ENCODE measurements at regions of chr4 and their contacts with region 1.

Region 1: DNA sequence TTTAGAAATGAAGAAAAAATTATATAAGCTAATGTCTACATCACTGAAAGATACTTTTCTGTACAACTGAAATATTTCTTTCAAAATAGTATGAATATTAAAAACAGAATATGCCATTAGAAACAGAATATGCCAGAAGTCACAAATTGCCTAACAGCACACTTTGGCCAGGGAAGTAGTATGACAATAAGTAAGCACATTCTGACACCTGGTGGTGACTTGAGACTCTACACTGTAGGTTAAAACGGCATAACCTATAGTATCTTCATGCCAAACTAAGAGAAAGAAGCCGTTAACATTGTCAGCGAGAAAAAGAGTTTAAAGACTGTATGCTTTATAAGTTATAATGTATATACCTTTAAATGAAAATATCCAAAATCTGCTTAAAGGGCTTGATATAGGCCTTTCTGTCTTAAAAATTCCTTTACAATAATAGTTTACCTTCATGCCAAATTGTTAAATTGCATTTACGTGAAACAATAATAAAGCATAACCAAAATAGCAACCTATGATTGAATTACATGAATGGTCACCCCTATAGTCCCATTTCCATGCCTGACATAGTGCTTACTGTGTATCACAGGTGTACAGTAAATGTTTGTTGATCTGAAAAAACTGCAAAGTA is 32.8 kb downstream of the FAM13A start:
- DNase-seq: peak; percentile 61
- H3K4me3 Mint-ChIP-seq: no peak overlapping the region
- H3K27ac Mint-ChIP-seq: no peak overlapping the region
- H3K4me1 Mint-ChIP-seq: no peaks in the 10 kb centered on the region
- H3K27me3 Mint-ChIP-seq: no peaks in the 10 kb centered on the region
- CTCF ChIP-seq: peak; percentile 58

Region 2: GRCh38 chr4:88526221-88526815 is 497.8 kb before region 1 on chr4:
- CTCF ChIA-PET with region 1: no interaction called
- intact Hi-C with region 1: loop called (anchors 2 kb)
- DNase-seq: peak; percentile 2
- H3K4me3 Mint-ChIP-seq: no peak overlapping the region
- H3K27ac Mint-ChIP-seq: no peak overlapping the region
- H3K4me1 Mint-ChIP-seq: peaks cover 9% of the 10 kb centered on the region
- H3K27me3 Mint-ChIP-seq: no peaks in the 10 kb centered on the region
- CTCF ChIP-seq: no peak

Region 3: DNA sequence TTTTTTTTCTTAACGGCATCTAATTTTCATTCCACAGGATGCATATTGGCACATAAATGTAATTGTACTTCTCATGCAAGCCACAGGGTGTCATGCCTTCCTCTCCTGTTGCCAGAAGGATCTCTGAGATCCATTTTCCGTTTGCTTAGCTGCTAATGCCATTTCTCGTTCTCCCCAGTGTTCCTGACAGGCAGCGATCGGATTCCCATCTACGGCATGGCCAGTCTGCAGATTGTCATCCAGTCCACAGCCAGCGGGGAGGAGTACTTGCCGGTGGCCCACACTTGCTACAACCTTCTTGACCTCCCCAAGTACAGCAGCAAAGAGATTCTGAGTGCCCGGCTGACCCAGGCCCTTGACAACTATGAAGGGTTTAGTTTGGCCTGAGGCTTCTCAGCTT is 317.6 kb before region 1 on chr4:
- CTCF ChIA-PET with region 1: no interaction called
- intact Hi-C with region 1: loop called (anchors 5 kb)
- DNase-seq: no peak
- H3K4me3 Mint-ChIP-seq: no peak overlapping the region
- H3K27ac Mint-ChIP-seq: no peak overlapping the region
- H3K4me1 Mint-ChIP-seq: no peaks in the 10 kb centered on the region
- H3K27me3 Mint-ChIP-seq: no peaks in the 10 kb centered on the region
- CTCF ChIP-seq: no peak

Region 4: GRCh38 chr4:88823058-88823919 is 200.9 kb before region 1 on chr4:
- CTCF ChIA-PET with region 1: interaction called, 19 read pairs
- intact Hi-C with region 1: loop called (anchors 1 kb)
- DNase-seq: peak; percentile 67
- H3K4me3 Mint-ChIP-seq: peak overlapping the region; percentile 80
- H3K27ac Mint-ChIP-seq: peak overlapping the region; percentile 93
- H3K4me1 Mint-ChIP-seq: peaks cover 8% of the 10 kb centered on the region
- H3K27me3 Mint-ChIP-seq: no peaks in the 10 kb centered on the region
- CTCF ChIP-seq: no peak

Region 5: DNA sequence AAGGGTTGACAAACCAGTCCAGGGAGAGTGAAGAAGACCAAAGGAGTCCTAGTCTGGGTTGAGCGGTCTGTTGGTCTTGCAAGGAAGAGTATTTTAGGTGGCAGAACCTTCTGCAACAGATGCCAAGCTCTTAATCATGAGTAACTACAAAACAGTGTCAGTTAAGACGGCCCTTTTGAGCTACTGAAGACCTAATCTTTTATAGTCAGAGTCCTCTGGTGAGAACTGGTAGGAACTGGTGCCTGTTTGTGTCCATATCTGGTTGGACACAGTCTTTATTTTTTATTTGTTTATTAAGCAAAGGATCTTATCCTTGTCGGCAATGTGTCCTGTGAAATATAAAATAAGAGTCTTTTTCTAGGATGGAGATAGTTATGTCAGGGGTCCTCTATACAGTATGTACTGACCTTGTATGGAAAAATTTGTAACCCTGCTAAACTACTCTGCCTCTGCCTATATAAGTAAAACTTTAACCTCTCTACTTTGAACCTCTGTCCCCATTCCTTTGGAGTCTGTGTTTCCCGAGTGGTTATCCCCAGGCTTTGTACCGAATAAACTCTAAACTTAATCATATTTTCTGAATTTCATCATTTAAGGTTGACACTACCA is 14.3 kb before region 1 on chr4:
- CTCF ChIA-PET with region 1: no interaction called
- intact Hi-C with region 1: loop called (anchors 1 kb)
- DNase-seq: no peak
- H3K4me3 Mint-ChIP-seq: no peak overlapping the region
- H3K27ac Mint-ChIP-seq: no peak overlapping the region
- H3K4me1 Mint-ChIP-seq: no peaks in the 10 kb centered on the region
- H3K27me3 Mint-ChIP-seq: no peaks in the 10 kb centered on the region
- CTCF ChIP-seq: no peak

Region 6: DNA sequence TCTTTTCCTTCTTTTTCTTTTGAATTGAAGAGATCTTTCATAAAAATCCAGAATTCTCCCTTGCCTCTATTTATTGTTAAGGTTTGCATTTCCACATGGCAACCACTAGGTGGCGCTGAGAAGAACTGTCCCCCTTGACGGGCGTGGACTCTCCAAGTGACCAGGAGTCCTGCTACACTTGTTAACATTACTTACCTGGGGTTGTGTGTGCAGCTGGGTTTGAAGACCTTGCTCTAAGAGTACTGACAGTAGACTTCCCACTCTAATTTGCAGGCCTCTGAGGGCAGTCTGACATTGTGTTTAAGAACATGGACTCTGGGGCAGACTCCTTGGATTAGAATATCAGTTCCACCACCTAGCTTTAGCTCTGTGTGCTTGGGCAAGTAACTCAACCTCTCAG is 230.7 kb after region 1 on chr4:
- CTCF ChIA-PET with region 1: no interaction called
- intact Hi-C with region 1: no loop called
- DNase-seq: peak; percentile 41
- H3K4me3 Mint-ChIP-seq: no peak overlapping the region
- H3K27ac Mint-ChIP-seq: peak overlapping the region; percentile 8
- H3K4me1 Mint-ChIP-seq: no peaks in the 10 kb centered on the region
- H3K27me3 Mint-ChIP-seq: no peaks in the 10 kb centered on the region
- CTCF ChIP-seq: no peak

Region 7: GRCh38 chr4:89939994-89940393 is 915.8 kb after region 1 on chr4:
- CTCF ChIA-PET with region 1: no interaction called
- intact Hi-C with region 1: no loop called
- DNase-seq: no peak
- H3K4me3 Mint-ChIP-seq: no peak overlapping the region
- H3K27ac Mint-ChIP-seq: no peak overlapping the region
- H3K4me1 Mint-ChIP-seq: no peaks in the 10 kb centered on the region
- H3K27me3 Mint-ChIP-seq: no peaks in the 10 kb centered on the region
- CTCF ChIP-seq: no peak

Measured in Calu3 (cell line).